Endothelial cell of umbilical vein (primary cell): ENCODE measurements at regions of chr3 and their contacts with region 1.

Region 1: GRCh38 chr3:136075218-136075808 is 109.8 kb downstream of the PPP2R3A start:
- DNase-seq: peak; percentile 81
- H3K4me3 ChIP-seq: no peak overlapping the region
- H3K27ac ChIP-seq: no peak overlapping the region
- H3K4me1 ChIP-seq: no peaks in the 10 kb centered on the region
- H3K27me3 ChIP-seq: no peaks in the 10 kb centered on the region
- CTCF ChIP-seq: peak; percentile 63 to 76
- POLR2A ChIP-seq: no peak

Region 2: DNA sequence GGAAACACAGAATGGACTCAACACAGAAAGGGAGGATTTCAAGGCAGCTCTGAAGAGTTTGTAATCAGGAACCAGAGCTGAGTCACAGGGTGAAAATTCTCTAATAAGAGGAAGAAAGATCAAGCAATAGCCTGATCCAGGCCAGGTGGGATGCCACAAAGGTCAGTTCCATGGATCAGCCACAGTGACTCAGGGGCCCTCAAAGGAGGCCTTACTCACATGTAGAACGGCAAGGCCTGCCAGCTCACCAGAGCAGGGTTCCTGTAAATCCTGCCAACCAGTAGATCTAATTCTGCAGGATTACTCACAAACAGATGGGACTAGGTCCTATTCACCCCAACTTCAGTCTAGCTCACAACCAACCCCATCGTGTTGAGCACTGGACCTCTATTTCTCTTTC is 188.1 kb before region 1 on chr3:
- CTCF ChIA-PET with region 1: no interaction called
- POLR2A ChIA-PET with region 1: no interaction called
- dilution Hi-C with region 1: no loop called
- intact Hi-C with region 1: no loop called
- DNase-seq: no peak
- H3K4me3 ChIP-seq: no peak overlapping the region
- H3K27ac ChIP-seq: no peak overlapping the region
- H3K4me1 ChIP-seq: no peaks in the 10 kb centered on the region
- H3K27me3 ChIP-seq: no peaks in the 10 kb centered on the region
- CTCF ChIP-seq: no peak
- POLR2A ChIP-seq: no peak

Region 3: GRCh38 chr3:136196401-136197158 is 121.3 kb after region 1 on chr3:
- CTCF ChIA-PET with region 1: interaction called, 17 read pairs
- POLR2A ChIA-PET with region 1: no interaction called
- dilution Hi-C with region 1: no loop called
- intact Hi-C with region 1: loop called (anchors 1 kb)
- DNase-seq: peak; percentile 100
- H3K4me3 ChIP-seq: peak overlapping the region; percentile 36 to 76 (median 48)
- H3K27ac ChIP-seq: peak overlapping the region; percentile 93
- H3K4me1 ChIP-seq: peaks cover 14% of the 10 kb centered on the region
- H3K27me3 ChIP-seq: no peaks in the 10 kb centered on the region
- CTCF ChIP-seq: no peak
- POLR2A ChIP-seq: peak; percentile 79

Region 4: DNA sequence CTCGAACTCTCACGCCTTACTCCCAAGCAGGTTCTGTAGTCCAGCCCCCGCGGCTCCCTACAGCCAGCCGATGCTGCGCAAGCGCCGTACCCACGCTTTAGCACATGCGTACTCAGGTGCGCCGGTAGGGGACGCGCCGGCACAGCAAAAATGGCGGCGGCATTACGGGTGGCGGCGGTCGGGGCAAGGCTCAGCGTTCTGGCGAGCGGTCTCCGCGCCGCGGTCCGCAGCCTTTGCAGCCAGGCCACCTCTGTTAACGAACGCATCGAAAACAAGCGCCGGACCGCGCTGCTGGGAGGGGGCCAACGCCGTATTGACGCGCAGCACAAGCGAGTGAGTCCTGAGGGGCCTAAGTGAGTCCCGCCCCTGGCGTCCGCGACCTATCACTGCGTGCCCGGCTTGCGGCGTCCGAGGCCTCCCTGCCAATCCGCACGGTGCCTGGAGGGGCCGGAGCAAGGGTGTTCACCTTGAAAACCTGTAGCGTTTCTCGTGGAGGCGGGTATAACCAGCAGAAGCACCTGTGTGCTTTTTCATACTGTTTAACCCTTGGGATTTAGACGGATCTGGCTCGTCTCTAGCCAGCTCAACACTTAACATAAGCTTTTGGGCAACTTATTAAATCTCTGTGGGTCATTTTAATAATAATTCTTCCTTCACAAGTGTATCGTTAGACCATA is 175.1 kb after region 1 on chr3 and contains the start of gene PCCB:
- CTCF ChIA-PET with region 1: interaction called, 12 read pairs
- POLR2A ChIA-PET with region 1: no interaction called
- dilution Hi-C with region 1: no loop called
- intact Hi-C with region 1: loop called (anchors 1 kb)
- DNase-seq: peak; percentile 96
- H3K4me3 ChIP-seq: peak within 1 kb of the TSS; percentile 31 to 73 (median 60)
- H3K27ac ChIP-seq: peak within 1 kb of the TSS; percentile 66
- H3K4me1 ChIP-seq: peaks cover 8% of the 10 kb centered on the region
- H3K27me3 ChIP-seq: no peaks in the 10 kb centered on the region
- CTCF ChIP-seq: peak; percentile 60 to 79
- POLR2A ChIP-seq: peak; percentile 81
- total RNA-seq, gene PCCB: 28.6 and 35.4 TPM in 2 replicates

Region 5: DNA sequence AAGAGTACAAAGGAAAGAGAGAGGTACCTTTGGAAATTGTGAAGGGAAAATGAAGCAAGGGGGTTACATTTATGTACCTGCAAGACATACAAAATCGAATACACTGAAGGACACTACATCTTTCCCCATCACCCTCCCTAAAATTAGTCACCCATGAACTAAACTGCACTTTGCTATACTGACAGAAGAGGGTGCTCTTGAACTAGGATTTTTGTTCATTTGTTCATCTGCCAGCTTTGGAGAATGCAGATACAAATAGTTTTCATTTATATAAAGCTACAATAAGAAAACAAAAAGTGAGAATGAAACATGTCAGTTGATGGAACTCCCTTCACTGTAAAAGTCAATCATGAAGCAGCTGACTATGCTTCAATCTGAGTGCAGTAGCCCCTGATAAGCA is 230.6 kb after region 1 on chr3:
- CTCF ChIA-PET with region 1: interaction called, 22 read pairs
- POLR2A ChIA-PET with region 1: no interaction called
- dilution Hi-C with region 1: no loop called
- intact Hi-C with region 1: no loop called
- DNase-seq: peak; percentile 61
- H3K4me3 ChIP-seq: no peak overlapping the region
- H3K27ac ChIP-seq: no peak overlapping the region
- H3K4me1 ChIP-seq: no peaks in the 10 kb centered on the region
- H3K27me3 ChIP-seq: no peaks in the 10 kb centered on the region
- CTCF ChIP-seq: peak in 1 of 2 donors; percentile 39
- POLR2A ChIP-seq: no peak

Region 6: GRCh38 chr3:136332776-136333175 is 257.5 kb after region 1 on chr3:
- CTCF ChIA-PET with region 1: interaction called, 3 read pairs
- POLR2A ChIA-PET with region 1: no interaction called
- dilution Hi-C with region 1: no loop called
- intact Hi-C with region 1: loop called (anchors 5 kb)
- DNase-seq: no peak
- H3K4me3 ChIP-seq: no peak overlapping the region
- H3K27ac ChIP-seq: no peak overlapping the region
- H3K4me1 ChIP-seq: no peaks in the 10 kb centered on the region
- H3K27me3 ChIP-seq: no peaks in the 10 kb centered on the region
- CTCF ChIP-seq: no peak
- POLR2A ChIP-seq: no peak

Region 7: DNA sequence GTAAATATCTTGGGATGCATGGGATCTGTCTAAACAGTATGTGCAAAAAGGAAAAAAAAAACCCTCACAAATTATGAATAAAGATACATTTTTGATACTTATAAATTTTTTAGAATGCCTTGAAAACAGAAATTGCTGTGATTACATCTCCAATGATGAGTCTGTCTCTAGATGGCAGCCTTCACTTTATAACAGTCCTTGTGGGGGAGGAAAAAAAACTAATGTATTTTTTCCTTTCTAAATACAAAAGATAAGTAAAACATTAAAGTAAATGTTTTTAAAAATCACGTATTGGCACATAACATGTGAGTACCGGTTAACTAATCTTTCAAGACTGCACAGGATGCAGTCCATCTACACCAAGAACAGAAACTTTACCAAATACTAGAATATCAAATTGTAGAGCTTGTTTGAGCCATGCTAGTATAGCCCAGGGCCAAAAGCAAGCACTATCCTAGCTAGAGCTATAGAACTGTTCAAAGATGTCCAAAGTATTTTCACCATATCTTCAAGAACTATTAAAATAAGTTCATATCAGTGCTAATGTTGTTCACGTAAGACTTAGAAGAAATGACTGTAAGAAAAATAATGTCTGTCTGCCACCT is 470.5 kb after region 1 on chr3:
- CTCF ChIA-PET with region 1: interaction called, 4 read pairs
- POLR2A ChIA-PET with region 1: no interaction called
- dilution Hi-C with region 1: no loop called
- intact Hi-C with region 1: loop called (anchors 10 kb)
- DNase-seq: peak; percentile 40
- H3K4me3 ChIP-seq: no peak overlapping the region
- H3K27ac ChIP-seq: no peak overlapping the region
- H3K4me1 ChIP-seq: peaks cover 26% of the 10 kb centered on the region
- H3K27me3 ChIP-seq: no peaks in the 10 kb centered on the region
- CTCF ChIP-seq: no peak
- POLR2A ChIP-seq: no peak

Region 8: GRCh38 chr3:137946345-137946973 is 1871.1 kb after region 1 on chr3:
- CTCF ChIA-PET with region 1: no interaction called
- POLR2A ChIA-PET with region 1: no interaction called
- dilution Hi-C with region 1: no loop called
- intact Hi-C with region 1: loop called (anchors 5 kb)
- DNase-seq: peak; percentile 57
- H3K4me3 ChIP-seq: no peak overlapping the region
- H3K27ac ChIP-seq: no peak overlapping the region
- H3K4me1 ChIP-seq: no peaks in the 10 kb centered on the region
- H3K27me3 ChIP-seq: no peaks in the 10 kb centered on the region
- CTCF ChIP-seq: peak; percentile 62 to 67
- POLR2A ChIP-seq: no peak